ENCODE measurements at regions of chr4 and their contacts with region 1.

Region 1: GRCh38 chr4:87006676-87007527 is 72.1 kb downstream of the AFF1 start:
- DNase-seq: peak; percentile 94
- H3K4me3 ChIP-seq: peak overlapping the region; percentile 84 to 93 (median 93)
- H3K27ac ChIP-seq: peak overlapping the region; percentile 92
- H3K4me1 ChIP-seq: peaks cover 39% of the 10 kb centered on the region
- H3K27me3 ChIP-seq: no peaks in the 10 kb centered on the region
- CTCF ChIP-seq: peak; percentile 12 to 13
- POLR2A ChIP-seq: peak; percentile 99

Region 2: GRCh38 chr4:86934771-86935565 is 71.9 kb before region 1 on chr4 and contains the start of gene AFF1:
- CTCF ChIA-PET with region 1: interaction called, 37 read pairs
- POLR2A ChIA-PET with region 1: interaction called, 64 read pairs
- dilution Hi-C with region 1: no loop called
- intact Hi-C with region 1: loop called (anchors 1 kb)
- DNase-seq: peak; percentile 93
- H3K4me3 ChIP-seq: peak within 1 kb of the TSS; percentile 59 to 86 (median 84)
- H3K27ac ChIP-seq: peak within 1 kb of the TSS; percentile 89
- H3K4me1 ChIP-seq: peaks cover 42% of the 10 kb centered on the region
- H3K27me3 ChIP-seq: no peaks in the 10 kb centered on the region
- CTCF ChIP-seq: peak; percentile 15 to 28
- POLR2A ChIP-seq: peak; percentile 91
- total RNA-seq, gene AFF1: 80.7 and 106 TPM in 2 replicates

Region 3: GRCh38 chr4:87032884-87033533 is 26.1 kb after region 1 on chr4:
- CTCF ChIA-PET with region 1: interaction called, 7 read pairs
- POLR2A ChIA-PET with region 1: interaction called, 10 read pairs
- dilution Hi-C with region 1: no loop called
- intact Hi-C with region 1: loop called (anchors 1 kb)
- DNase-seq: peak; percentile 94
- H3K4me3 ChIP-seq: peak overlapping the region in 1 of 3 experiments; percentile 13
- H3K27ac ChIP-seq: peak overlapping the region; percentile 19
- H3K4me1 ChIP-seq: peaks cover 63% of the 10 kb centered on the region
- H3K27me3 ChIP-seq: no peaks in the 10 kb centered on the region
- CTCF ChIP-seq: no peak
- POLR2A ChIP-seq: peak; percentile 33

Region 4: GRCh38 chr4:87078987-87079486 is 72.1 kb after region 1 on chr4:
- CTCF ChIA-PET with region 1: no interaction called
- POLR2A ChIA-PET with region 1: no interaction called
- dilution Hi-C with region 1: no loop called
- intact Hi-C with region 1: loop called (anchors 2 kb)
- DNase-seq: peak; percentile 71
- H3K4me3 ChIP-seq: no peak overlapping the region
- H3K27ac ChIP-seq: peak overlapping the region; percentile 16
- H3K4me1 ChIP-seq: peaks cover 21% of the 10 kb centered on the region
- H3K27me3 ChIP-seq: no peaks in the 10 kb centered on the region
- CTCF ChIP-seq: no peak
- POLR2A ChIP-seq: no peak

Region 5: DNA sequence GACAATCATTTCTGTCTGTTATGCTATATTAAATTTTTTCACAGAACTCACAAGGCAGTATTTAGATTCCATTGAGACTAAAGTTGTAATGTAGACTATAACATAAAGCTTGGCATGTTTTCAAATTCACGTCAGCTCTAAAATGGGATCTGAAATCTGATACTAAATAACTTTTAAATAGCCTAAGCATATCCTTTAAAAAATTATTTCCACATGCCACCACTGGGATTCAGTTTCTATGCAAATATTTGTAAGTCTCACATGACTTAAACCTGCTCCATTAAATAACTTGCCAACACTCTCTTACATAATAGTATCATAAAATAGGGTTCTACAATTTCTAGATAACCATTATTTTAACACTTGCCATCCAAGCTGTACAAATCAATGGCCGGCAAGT is 181.1 kb after region 1 on chr4:
- CTCF ChIA-PET with region 1: no interaction called
- POLR2A ChIA-PET with region 1: no interaction called
- dilution Hi-C with region 1: no loop called
- intact Hi-C with region 1: no loop called
- DNase-seq: no peak
- H3K4me3 ChIP-seq: no peak overlapping the region
- H3K27ac ChIP-seq: no peak overlapping the region
- H3K4me1 ChIP-seq: no peaks in the 10 kb centered on the region
- H3K27me3 ChIP-seq: no peaks in the 10 kb centered on the region
- CTCF ChIP-seq: no peak
- POLR2A ChIP-seq: no peak

Region 6: GRCh38 chr4:87235020-87235671 is 228.2 kb after region 1 on chr4:
- CTCF ChIA-PET with region 1: no interaction called
- POLR2A ChIA-PET with region 1: no interaction called
- dilution Hi-C with region 1: no loop called
- intact Hi-C with region 1: loop called (anchors 10 kb)
- DNase-seq: no peak
- H3K4me3 ChIP-seq: peak overlapping the region in 2 of 3 experiments; percentile 74 to 96
- H3K27ac ChIP-seq: no peak overlapping the region
- H3K4me1 ChIP-seq: peaks cover 2% of the 10 kb centered on the region
- H3K27me3 ChIP-seq: peaks cover 0 to 6% of the 10 kb centered on the region in 2 experiments
- CTCF ChIP-seq: no peak
- POLR2A ChIP-seq: no peak

Region 7: DNA sequence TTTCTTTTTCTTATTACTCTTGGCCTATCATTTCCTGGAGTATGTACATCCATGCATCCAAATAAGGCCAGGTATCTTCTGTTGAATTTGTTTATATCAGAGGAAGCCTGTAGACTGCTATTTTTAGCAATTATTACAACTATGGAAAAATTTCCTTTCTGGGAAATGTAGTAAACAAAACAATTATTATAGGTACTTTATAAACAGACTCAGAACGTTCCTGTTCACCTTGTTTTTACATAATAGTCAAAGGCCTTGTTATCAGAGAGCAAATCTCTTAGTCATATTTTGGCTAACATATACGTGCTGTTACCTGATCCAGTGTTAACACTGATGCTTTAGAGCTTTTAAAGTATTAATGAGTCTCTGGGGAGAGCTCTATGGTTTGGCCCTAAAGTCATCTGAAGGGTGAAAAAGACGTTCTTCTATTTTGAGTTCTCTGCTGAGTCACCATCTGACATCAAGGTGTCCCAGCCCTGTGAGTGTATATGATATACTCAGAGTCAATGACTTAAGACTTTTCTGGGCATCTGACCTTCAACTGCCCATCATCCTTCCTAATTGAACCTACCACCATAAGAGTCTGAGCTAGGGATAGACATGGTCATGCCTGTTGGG is 515.0 kb after region 1 on chr4:
- CTCF ChIA-PET with region 1: no interaction called
- POLR2A ChIA-PET with region 1: no interaction called
- dilution Hi-C with region 1: no loop called
- intact Hi-C with region 1: no loop called
- DNase-seq: no peak
- H3K4me3 ChIP-seq: no peak overlapping the region
- H3K27ac ChIP-seq: no peak overlapping the region
- H3K4me1 ChIP-seq: no peaks in the 10 kb centered on the region
- H3K27me3 ChIP-seq: peaks cover 0 to 5% of the 10 kb centered on the region in 2 experiments
- CTCF ChIP-seq: no peak
- POLR2A ChIP-seq: no peak